A549 (cell line): ENCODE measurements at regions of chr7 and their contacts with region 1.

Region 1: DNA sequence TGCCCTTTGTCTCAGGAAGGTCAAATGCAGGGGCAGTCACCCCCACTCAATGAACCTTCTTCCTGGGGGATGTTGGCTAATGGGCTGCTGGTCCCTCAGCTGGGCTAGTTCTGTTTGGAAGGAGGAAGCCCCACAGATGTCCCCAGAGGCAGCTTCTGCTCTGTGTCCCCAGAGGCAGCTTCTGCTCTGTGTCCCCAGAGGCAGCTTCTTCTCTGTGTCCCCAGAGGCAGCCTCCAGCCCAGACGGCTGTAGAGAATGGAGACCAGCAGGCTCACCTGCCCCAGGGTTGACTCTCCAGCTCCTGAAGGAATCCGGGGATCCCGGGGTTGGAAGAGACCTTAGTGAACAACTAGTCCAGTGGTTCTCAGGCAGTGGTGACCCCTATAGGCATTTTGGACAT is 62.5 kb upstream of the LEP start:
- DNase-seq: no peak
- ATAC-seq: 0 out of 6 replicates have a peak, but pooled peaks of 1 of the 2 experiments have one; percentile 26
- H3K4me3 ChIP-seq: no peak overlapping the region
- H3K27ac ChIP-seq: no peak overlapping the region
- H3K4me1 ChIP-seq: no peaks in the 10 kb centered on the region
- CTCF ChIP-seq: no peak
- EP300 ChIP-seq: no peak
- POLR2A ChIP-seq: no peak
- RAD21 ChIP-seq: no peak

Region 2: DNA sequence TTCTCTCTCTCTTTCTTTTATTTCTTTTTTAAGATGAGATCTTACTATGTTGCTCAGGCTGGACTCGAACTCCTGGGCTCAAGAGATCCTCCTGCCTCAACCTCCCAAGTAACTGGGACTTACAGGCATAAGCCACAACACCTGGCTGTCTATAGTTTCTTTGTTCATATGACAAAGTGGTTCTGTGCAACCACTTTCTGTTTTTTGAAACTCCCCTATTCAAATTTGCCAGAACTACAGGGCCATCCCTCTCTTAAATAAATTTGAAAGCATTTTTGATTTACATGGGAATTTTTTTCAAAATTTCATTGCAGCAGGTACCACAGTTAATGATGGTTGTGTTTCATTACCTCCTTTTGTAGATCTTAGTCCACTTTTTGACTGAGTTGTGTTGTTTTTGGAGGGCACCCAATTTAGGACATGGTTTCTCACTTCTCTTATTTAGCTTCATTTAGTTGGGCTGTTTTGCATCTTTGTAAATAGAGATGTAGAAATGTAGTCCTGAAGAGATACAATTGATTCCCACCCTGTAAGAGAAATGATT is 266.6 kb before region 1 on chr7:
- CTCF ChIA-PET with region 1: no interaction called
- POLR2A ChIA-PET with region 1: no interaction called
- DNase-seq: no peak
- ATAC-seq: no peak
- H3K4me3 ChIP-seq: no peak overlapping the region
- H3K27ac ChIP-seq: no peak overlapping the region
- H3K4me1 ChIP-seq: no peaks in the 10 kb centered on the region
- CTCF ChIP-seq: no peak
- EP300 ChIP-seq: no peak
- POLR2A ChIP-seq: no peak
- RAD21 ChIP-seq: no peak

Region 3: DNA sequence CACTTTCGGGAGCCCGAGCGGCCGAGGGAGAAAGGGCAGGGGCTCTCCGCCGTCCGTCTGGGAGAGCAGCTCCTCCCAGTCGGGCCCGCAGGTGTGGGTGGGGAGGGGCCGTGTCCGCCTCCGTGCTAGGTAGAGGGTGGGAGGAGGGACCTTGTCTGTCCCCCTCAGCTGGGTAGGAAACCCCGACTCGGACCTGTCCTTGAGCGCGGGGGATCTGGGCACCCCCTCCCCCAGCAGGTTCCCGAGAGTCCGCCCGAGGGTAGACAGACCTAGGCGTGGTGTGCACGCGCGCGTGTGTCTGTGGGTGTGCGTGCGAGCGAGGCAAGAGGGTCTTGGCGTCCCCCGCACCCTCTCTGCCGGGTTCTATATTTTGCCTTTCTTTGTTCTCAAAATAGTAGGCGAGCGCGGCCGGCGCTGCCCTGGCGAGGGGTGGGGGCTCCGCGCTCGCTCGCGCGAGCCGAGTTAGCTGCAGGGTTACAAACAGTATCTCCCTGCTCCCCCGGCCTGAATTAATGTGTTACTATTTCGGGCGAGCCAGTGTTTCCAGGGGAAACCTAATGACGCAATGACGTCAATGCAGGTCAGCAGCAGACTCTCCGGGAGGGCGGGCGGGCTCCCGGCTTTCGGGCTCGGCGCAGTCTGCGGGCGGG is 11.4 kb before region 1 on chr7:
- CTCF ChIA-PET with region 1: interaction called, 11 read pairs
- POLR2A ChIA-PET with region 1: no interaction called
- DNase-seq: peak; percentile 60 to 72
- ATAC-seq: peak; percentile 33 to 50
- H3K4me3 ChIP-seq: peak overlapping the region; percentile 50
- H3K27ac ChIP-seq: peak overlapping the region; percentile 51 to 75; a peak in 5 of 6 replicates
- H3K4me1 ChIP-seq: peaks cover 25% of the 10 kb centered on the region
- CTCF ChIP-seq: no peak
- EP300 ChIP-seq: no peak
- POLR2A ChIP-seq: no peak
- RAD21 ChIP-seq: no peak

Region 4: GRCh38 chr7:128304212-128304611 is 125.6 kb after region 1 on chr7:
- CTCF ChIA-PET with region 1: no interaction called
- POLR2A ChIA-PET with region 1: no interaction called
- DNase-seq: no peak
- ATAC-seq: no peak
- H3K4me3 ChIP-seq: no peak overlapping the region
- H3K27ac ChIP-seq: no peak overlapping the region
- H3K4me1 ChIP-seq: no peaks in the 10 kb centered on the region
- CTCF ChIP-seq: no peak
- EP300 ChIP-seq: no peak
- POLR2A ChIP-seq: no peak
- RAD21 ChIP-seq: no peak